Activated CD4-positive, alpha-beta memory T cell treated with anti-CD3 and anti-CD28 coated beads for 36 hours (primary cell): ENCODE measurements at regions of chr3 and their contacts with region 1.

Region 1: GRCh38 chr3:120348981-120349818 is at the start of gene LRRC58:
- DNase-seq: peak; percentile 91
- H3K4me3 Mint-ChIP-seq: peak within 1 kb of the TSS; percentile 84
- H3K27ac Mint-ChIP-seq: peak within 1 kb of the TSS; percentile 85
- H3K4me1 Mint-ChIP-seq: peaks cover 44% of the 10 kb centered on the region
- H3K27me3 Mint-ChIP-seq: no peaks in the 10 kb centered on the region
- total RNA-seq, gene LRRC58: 16.2 to 16.9 TPM

Region 2: DNA sequence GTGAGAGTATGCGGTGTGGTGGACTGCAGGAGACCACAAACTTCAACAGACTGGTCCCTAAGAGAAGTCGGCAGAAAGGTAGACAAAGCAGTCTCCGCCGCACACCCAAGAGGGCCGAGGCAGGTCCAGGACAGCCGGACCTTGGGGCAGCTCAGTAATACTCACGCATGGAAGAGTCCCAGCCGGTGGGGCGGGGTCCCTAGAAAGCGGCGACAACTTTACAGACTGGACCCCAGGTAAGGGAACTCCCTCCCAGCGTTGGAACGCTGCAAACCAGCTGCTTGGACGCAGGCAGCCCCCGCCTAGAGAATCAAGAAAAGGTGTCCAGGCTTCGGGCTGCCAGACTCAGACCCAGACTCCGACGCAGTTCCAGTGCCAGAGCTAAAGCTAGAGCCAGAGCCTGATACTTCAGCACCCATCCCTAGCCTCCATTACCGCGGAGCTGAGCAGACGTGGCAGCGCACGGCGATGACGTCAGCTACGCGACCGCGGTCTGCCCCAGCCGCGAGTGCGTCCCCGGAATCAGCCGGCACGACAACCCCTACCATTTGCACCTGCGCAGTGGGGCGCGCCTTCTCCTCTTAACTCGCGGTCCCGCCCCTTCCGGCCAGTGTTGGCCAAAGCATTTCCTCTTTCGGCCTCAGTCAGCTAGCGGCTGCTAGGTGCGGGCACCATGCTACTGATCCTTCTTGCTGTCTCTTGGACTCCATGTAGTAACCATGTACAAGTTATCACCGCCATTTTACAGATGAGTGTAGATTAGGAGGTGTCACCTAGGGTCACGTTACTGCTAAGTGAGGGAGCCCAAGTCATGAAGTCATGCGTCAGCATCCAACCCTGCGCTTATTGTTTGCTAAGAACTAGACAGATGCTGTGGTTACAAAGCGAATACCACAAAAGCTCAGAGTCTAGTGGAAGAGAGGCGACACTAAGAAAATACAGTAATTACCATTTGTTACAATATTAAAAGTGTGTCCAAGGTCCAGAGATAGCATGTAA is 885.7 kb before region 1 on chr3 and contains the start of gene TMEM39A:
- CTCF ChIA-PET with region 1: no interaction called
- POLR2A ChIA-PET with region 1: interaction called, 3 read pairs
- intact Hi-C with region 1: loop called (anchors 2 kb)
- DNase-seq: peak; percentile 99
- H3K4me3 Mint-ChIP-seq: peak within 1 kb of the TSS; percentile 97
- H3K27ac Mint-ChIP-seq: peak within 1 kb of the TSS; percentile 98
- H3K4me1 Mint-ChIP-seq: peaks cover 41% of the 10 kb centered on the region
- H3K27me3 Mint-ChIP-seq: no peaks in the 10 kb centered on the region
- total RNA-seq, gene TMEM39A: 33.9 to 34.3 TPM

Region 3: GRCh38 chr3:119912220-119912619 is 437.0 kb before region 1 on chr3:
- CTCF ChIA-PET with region 1: no interaction called
- POLR2A ChIA-PET with region 1: no interaction called
- intact Hi-C with region 1: loop called (anchors 2 kb)
- DNase-seq: no peak
- H3K4me3 Mint-ChIP-seq: no peak overlapping the region
- H3K27ac Mint-ChIP-seq: peak overlapping the region; percentile 69
- H3K4me1 Mint-ChIP-seq: peaks cover 24% of the 10 kb centered on the region
- H3K27me3 Mint-ChIP-seq: no peaks in the 10 kb centered on the region

Region 4: GRCh38 chr3:120417272-120417911 is 68.2 kb after region 1 on chr3:
- CTCF ChIA-PET with region 1: interaction called, 28 read pairs
- POLR2A ChIA-PET with region 1: interaction called, 4 read pairs
- intact Hi-C with region 1: loop called (anchors 1 kb)
- DNase-seq: peak; percentile 93
- H3K4me3 Mint-ChIP-seq: peak overlapping the region; percentile 74
- H3K27ac Mint-ChIP-seq: no peak overlapping the region
- H3K4me1 Mint-ChIP-seq: peaks cover 12% of the 10 kb centered on the region
- H3K27me3 Mint-ChIP-seq: no peaks in the 10 kb centered on the region

Region 5: GRCh38 chr3:120432150-120432860 is 83.1 kb after region 1 on chr3:
- CTCF ChIA-PET with region 1: no interaction called
- POLR2A ChIA-PET with region 1: no interaction called
- intact Hi-C with region 1: no loop called
- DNase-seq: no peak
- H3K4me3 Mint-ChIP-seq: no peak overlapping the region
- H3K27ac Mint-ChIP-seq: no peak overlapping the region
- H3K4me1 Mint-ChIP-seq: no peaks in the 10 kb centered on the region
- H3K27me3 Mint-ChIP-seq: peaks cover 11% of the 10 kb centered on the region

Region 6: DNA sequence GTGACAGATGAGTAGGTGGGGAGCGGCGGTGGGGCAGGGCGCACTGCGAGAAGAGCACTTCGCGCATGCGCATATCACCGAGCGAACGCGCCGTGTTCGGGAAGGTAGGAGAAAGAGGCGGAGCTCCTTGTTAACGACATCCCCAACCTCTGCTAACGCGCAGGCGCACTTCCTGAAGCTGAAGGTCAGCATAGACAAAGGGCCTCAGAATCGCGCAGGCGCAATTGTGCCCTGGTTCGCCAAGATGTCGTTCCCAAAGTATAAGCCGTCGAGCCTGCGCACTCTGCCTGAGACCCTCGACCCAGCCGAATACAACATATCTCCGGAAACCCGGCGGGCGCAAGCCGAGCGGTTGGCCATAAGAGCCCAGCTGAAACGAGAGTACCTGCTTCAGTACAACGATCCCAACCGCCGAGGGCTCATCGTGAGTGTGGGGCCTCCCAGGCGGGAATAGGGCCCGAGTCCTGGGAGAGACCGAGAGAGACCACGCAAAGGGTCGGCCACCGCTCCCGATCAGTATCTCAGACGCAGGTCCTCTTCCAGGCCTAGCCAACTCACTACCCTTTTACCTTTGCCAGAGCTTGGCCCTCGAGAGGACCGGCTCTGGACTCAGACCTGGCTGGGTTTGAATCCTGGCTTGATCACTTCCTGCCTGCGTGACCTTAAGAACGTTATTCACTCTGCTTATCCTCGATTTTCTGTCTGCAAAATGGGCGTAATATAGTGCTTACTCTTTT is 247.1 kb after region 1 on chr3 and contains the start of gene NDUFB4:
- CTCF ChIA-PET with region 1: no interaction called
- POLR2A ChIA-PET with region 1: interaction called, 4 read pairs
- intact Hi-C with region 1: loop called (anchors 1 kb)
- DNase-seq: peak; percentile 97
- H3K4me3 Mint-ChIP-seq: peak within 1 kb of the TSS; percentile 87
- H3K27ac Mint-ChIP-seq: peak within 1 kb of the TSS; percentile 91
- H3K4me1 Mint-ChIP-seq: peaks cover 10% of the 10 kb centered on the region
- H3K27me3 Mint-ChIP-seq: peaks cover 2% of the 10 kb centered on the region
- total RNA-seq, gene NDUFB4: 130 to 143 TPM